H1 (cell line): ENCODE measurements at regions of chr9 and their contacts with region 1.

Region 1: DNA sequence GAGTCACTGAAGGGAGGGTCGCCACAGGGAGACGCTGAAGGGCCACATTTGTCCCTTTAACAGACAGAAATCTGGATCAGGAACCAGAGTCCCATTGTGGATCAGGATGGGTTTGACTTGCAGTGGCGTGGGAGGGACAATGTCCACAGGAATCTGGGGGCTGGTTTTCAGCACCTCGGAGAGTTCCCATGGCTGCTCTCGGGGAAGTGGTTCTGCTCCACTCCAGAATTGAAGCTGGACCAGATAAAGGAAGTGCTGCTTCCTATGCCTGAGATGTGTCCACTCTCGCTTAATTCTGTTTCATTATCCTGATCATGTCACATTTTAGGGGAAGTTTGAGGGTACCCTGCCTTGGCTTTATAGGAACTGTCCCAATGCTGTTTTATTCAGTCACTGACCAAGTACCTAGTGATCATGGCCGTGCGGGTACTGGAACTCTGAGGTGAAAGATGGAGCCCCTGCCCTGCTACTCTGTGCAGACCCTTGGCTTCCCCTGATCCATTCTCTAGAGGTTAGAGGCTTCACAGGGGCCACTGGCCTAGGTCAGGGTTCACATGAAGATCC is 28.7 kb downstream of the ENHO start:
- DNase-seq: peak in 1 of 2 experiments; percentile 84
- H3K4me3 ChIP-seq: no peak overlapping the region
- H3K27ac ChIP-seq: no peak overlapping the region
- H3K4me1 ChIP-seq: no peaks in the 10 kb centered on the region
- H3K27me3 ChIP-seq: no peaks in the 10 kb centered on the region; a peak in 1 of 7 replicates
- CTCF ChIP-seq: no peak
- EP300 ChIP-seq: no peak
- POLR2A ChIP-seq: no peak
- RAD21 ChIP-seq: no peak

Region 2: DNA sequence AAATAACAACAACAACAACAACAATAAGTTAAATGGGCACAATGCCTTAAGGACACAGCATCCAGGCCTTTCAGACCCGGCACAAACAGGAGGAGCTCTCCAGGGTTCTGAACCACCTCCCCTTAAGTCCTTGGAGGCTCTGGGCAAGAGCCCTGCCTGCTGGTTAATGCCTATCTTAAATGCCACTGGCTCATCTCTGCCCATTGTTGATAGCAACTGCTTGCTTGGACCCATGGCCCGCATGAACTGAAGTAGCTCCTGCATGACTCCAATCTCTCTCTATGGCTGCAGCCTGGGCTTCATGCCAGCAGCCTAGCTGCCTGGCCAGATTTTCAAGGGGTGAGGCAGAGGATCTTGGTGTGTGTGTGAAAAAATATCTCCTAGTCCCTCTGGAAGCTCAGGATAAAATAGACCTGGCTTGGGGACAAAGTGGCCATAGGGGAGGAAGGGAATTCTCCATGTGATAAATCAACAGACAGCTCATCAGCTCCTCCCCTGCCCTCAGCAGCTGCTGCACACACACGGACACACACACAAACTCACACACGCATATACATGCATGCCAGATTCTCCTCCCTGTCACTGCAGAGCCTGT is 63.1 kb before region 1 on chr9:
- CTCF ChIA-PET with region 1: interaction called, 26 read pairs
- POLR2A ChIA-PET with region 1: no interaction called
- DNase-seq: peak; percentile 34 to 69
- H3K4me3 ChIP-seq: no peak overlapping the region
- H3K27ac ChIP-seq: no peak overlapping the region
- H3K4me1 ChIP-seq: no peaks in the 10 kb centered on the region
- H3K27me3 ChIP-seq: no peaks in the 10 kb centered on the region
- CTCF ChIP-seq: no peak
- EP300 ChIP-seq: no peak
- POLR2A ChIP-seq: no peak
- RAD21 ChIP-seq: peak in 1 of 2 experiments; percentile 8; a peak in 1 of 4 replicates

Region 3: DNA sequence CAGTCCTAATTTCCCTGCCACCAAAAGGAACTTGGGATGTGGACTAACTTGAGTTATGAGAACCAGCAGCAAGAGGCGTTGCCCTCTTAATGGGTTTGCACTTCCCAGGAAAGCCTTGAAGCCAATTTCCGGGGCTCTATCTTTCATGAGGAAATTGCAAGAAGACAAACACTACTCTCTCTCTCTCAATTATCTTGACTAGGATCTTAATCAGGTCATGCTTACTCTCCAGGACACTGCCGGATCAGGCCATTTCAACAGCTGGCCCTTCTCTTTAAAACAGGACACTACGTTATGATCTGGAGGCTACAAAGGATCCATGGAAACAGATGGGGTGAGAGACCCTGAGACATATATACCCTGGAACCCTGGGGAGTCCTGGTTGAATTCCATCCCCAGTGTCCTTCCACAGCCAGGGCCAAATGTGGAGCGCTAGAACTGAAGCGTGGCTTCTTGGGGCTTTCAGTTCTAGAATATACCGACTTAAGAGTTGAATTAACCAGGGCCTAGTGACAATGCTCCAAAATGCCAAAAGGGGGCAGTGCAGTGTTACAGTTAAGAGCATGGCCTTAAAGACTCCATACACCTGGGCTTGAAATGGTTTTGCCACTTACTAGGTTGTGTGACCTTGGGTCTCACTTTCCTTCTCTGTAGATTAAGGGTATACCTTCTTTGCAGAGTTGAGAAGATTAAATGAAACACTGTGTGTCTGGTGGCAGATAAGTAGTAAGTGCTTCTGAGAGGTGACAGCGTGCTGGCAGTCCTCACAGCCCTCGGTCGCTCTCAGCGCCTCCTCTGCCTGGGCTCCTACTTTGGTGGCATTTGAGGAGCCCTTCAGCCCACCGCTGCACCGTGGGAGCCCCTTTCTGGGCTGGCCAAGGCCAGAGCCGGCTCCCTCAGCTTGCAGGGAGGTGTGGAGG is 56.8 kb before region 1 on chr9:
- CTCF ChIA-PET with region 1: interaction called, 41 read pairs
- POLR2A ChIA-PET with region 1: no interaction called
- DNase-seq: peak; percentile 47 to 73
- H3K4me3 ChIP-seq: no peak overlapping the region
- H3K27ac ChIP-seq: no peak overlapping the region
- H3K4me1 ChIP-seq: no peaks in the 10 kb centered on the region
- H3K27me3 ChIP-seq: no peaks in the 10 kb centered on the region
- CTCF ChIP-seq: peak in 2 of 3 experiments; percentile 91 to 94; a peak in 3 of 4 replicates
- EP300 ChIP-seq: no peak
- POLR2A ChIP-seq: no peak
- RAD21 ChIP-seq: peak; percentile 95 to 99

Region 4: GRCh38 chr9:34446468-34446891 is 47.6 kb before region 1 on chr9:
- CTCF ChIA-PET with region 1: interaction called, 41 read pairs
- POLR2A ChIA-PET with region 1: no interaction called
- DNase-seq: no peak
- H3K4me3 ChIP-seq: no peak overlapping the region
- H3K27ac ChIP-seq: no peak overlapping the region
- H3K4me1 ChIP-seq: peaks cover 2 to 6% (median 5%) of the 10 kb centered on the region in 4 experiments; a peak in 4 of 7 replicates
- H3K27me3 ChIP-seq: no peaks in the 10 kb centered on the region
- CTCF ChIP-seq: no peak
- EP300 ChIP-seq: no peak
- POLR2A ChIP-seq: no peak
- RAD21 ChIP-seq: no peak

Region 5: GRCh38 chr9:34451545-34451944 is 42.5 kb before region 1 on chr9:
- CTCF ChIA-PET with region 1: interaction called, 10 read pairs
- POLR2A ChIA-PET with region 1: no interaction called
- DNase-seq: no peak
- H3K4me3 ChIP-seq: no peak overlapping the region
- H3K27ac ChIP-seq: no peak overlapping the region
- H3K4me1 ChIP-seq: peaks cover 0 to 4% (median 3%) of the 10 kb centered on the region in 4 experiments; a peak in 3 of 7 replicates
- H3K27me3 ChIP-seq: no peaks in the 10 kb centered on the region; a peak in 2 of 7 replicates
- CTCF ChIP-seq: no peak
- EP300 ChIP-seq: no peak
- POLR2A ChIP-seq: no peak
- RAD21 ChIP-seq: no peak

Region 6: DNA sequence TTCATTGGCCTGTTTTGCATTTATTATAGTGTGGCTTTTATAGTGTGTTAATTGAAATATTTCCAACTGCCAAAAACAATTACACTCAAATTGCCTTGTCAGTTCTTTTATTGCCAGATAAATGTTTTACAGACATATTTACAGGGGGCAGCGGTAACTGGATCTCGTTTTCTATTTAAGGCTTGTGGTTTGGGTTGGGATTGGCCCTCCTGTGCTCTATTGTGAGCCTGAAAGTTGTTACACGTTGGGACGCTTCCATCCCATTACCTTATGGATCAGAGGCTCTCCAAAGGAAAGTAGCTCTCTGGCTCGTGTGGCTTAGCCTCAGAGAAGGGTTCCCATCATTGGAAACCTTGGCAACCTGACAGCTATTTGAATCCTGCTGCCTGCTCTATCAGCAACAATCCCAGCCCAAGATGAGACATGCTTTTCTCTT is 14.6 kb before region 1 on chr9:
- CTCF ChIA-PET with region 1: interaction called, 11 read pairs
- POLR2A ChIA-PET with region 1: no interaction called
- DNase-seq: no peak
- H3K4me3 ChIP-seq: no peak overlapping the region
- H3K27ac ChIP-seq: no peak overlapping the region
- H3K4me1 ChIP-seq: no peaks in the 10 kb centered on the region
- H3K27me3 ChIP-seq: no peaks in the 10 kb centered on the region; a peak in 1 of 7 replicates
- CTCF ChIP-seq: no peak
- EP300 ChIP-seq: no peak
- POLR2A ChIP-seq: no peak
- RAD21 ChIP-seq: no peak

Region 7: GRCh38 chr9:34675048-34675714 is 181.1 kb after region 1 on chr9:
- CTCF ChIA-PET with region 1: no interaction called
- POLR2A ChIA-PET with region 1: no interaction called
- DNase-seq: peak in 1 of 2 experiments; percentile 92
- H3K4me3 ChIP-seq: no peak overlapping the region
- H3K27ac ChIP-seq: no peak overlapping the region
- H3K4me1 ChIP-seq: 0 out of 7 replicates have a peak, but pooled peaks cover 0 to 2% (median under 1%) of the 10 kb centered on the region in 4 experiments
- H3K27me3 ChIP-seq: no peaks in the 10 kb centered on the region
- CTCF ChIP-seq: peak; percentile 92 to 100 (median 99)
- EP300 ChIP-seq: peak in 1 of 2 experiments; percentile 48; a peak in 1 of 3 replicates
- POLR2A ChIP-seq: no peak
- RAD21 ChIP-seq: peak; percentile 92 to 93

Region 8: GRCh38 chr9:34701769-34702736 is 208.0 kb after region 1 on chr9:
- CTCF ChIA-PET with region 1: no interaction called
- POLR2A ChIA-PET with region 1: no interaction called
- DNase-seq: peak; percentile 21 to 92
- H3K4me3 ChIP-seq: peak overlapping the region; percentile 38 to 65 (median 45)
- H3K27ac ChIP-seq: no peak overlapping the region
- H3K4me1 ChIP-seq: peaks cover 0 to 5% (median 2%) of the 10 kb centered on the region in 4 experiments; a peak in 2 of 7 replicates
- H3K27me3 ChIP-seq: peaks cover 0 to 30% (median 18%) of the 10 kb centered on the region in 4 experiments; a peak in 6 of 7 replicates
- CTCF ChIP-seq: peak; percentile 97 to 98 (median 98)
- EP300 ChIP-seq: no peak
- POLR2A ChIP-seq: no peak
- RAD21 ChIP-seq: peak; percentile 77 to 81